PC-3 (cell line): ENCODE measurements at regions of chr3 and their contacts with region 1.

Region 1: DNA sequence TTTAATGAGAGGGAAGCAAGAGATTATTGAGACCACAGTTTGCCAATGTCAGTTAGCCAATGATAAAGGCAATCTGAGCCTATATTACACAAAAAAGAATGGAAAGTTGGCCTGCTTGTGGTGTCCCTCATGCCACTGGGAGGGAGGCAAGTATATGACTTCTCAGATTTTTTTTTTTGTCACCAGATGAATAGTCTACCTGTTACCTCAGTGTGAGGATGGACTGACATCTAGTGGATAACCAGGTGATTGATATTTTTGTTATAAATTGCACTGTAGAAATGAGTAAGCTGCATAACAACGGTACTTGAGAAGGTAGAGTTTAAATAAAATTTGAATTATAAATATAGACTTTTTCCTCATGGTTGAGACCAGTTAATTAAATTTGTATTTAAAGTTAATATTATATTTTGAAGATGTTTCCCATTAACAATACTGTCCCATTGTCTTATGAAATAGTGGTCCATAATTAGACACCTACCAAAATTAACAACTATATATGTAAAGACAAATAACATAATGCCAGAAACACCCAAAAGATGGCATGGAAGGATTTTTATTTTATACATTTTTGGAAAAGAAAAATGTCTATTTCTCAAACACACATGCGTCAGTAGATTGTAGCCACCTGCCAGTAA is 237.8 kb upstream of the GADL1 start:
- DNase-seq: peak; percentile 76
- ATAC-seq: peak; percentile 64
- H3K4me3 ChIP-seq: no peak overlapping the region
- H3K27ac ChIP-seq: no peak overlapping the region
- H3K4me1 ChIP-seq: no peaks in the 10 kb centered on the region
- H3K27me3 ChIP-seq: no peaks in the 10 kb centered on the region
- CTCF ChIP-seq: peak; percentile 91

Region 2: GRCh38 chr3:30970183-30970582 is 162.1 kb before region 1 on chr3:
- CTCF ChIA-PET with region 1: no interaction called
- POLR2A ChIA-PET with region 1: no interaction called
- intact Hi-C with region 1: loop called (anchors 1 kb)
- DNase-seq: peak; percentile 67
- ATAC-seq: peak; percentile 97
- H3K4me3 ChIP-seq: no peak overlapping the region
- H3K27ac ChIP-seq: no peak overlapping the region
- H3K4me1 ChIP-seq: no peaks in the 10 kb centered on the region
- H3K27me3 ChIP-seq: no peaks in the 10 kb centered on the region
- CTCF ChIP-seq: peak; percentile 86

Region 3: DNA sequence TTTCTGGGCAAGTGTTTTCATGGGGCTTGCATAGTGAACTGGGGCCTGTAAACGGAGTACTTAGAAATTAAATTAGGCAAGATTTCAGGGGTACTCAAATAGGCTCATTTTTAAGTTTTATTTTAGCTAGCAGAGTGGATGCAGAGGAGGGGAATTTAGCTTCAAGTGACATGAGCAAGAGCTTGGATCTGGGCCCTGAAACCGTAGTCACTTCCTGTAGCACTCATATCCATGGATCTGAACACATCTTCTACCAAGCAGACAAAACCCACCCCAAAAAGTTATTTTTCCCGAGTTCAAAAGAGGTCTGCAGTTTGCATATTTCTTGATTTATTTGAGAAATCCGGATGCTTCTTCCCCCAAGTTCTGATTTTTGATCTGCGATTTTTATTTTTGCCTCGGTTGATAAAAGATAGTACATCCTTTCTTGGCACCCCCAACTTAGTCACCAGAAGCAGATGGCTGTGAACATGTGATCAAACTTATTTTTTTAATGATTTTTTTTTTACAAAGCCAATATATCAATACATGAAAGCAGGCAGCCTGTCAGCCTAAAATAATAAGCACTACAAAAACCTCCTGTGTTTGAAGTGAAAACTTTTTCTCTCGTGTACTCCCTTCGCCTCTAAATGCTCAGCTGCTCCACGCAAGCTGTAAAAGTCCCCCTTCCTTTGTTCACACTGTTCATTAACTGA is 363.9 kb after region 1 on chr3:
- CTCF ChIA-PET with region 1: no interaction called
- POLR2A ChIA-PET with region 1: no interaction called
- intact Hi-C with region 1: no loop called
- DNase-seq: peak; percentile 44
- ATAC-seq: peak; percentile 45
- H3K4me3 ChIP-seq: no peak overlapping the region
- H3K27ac ChIP-seq: no peak overlapping the region
- H3K4me1 ChIP-seq: peaks cover 7% of the 10 kb centered on the region; the same call in 1 of the 2 replicates
- H3K27me3 ChIP-seq: no peaks in the 10 kb centered on the region
- CTCF ChIP-seq: no peak